Activated CD8-positive, alpha-beta memory T cell treated with anti-CD3 and anti-CD28 coated beads, Interleukin-2, amount 10 ng/mL, durations not matched to agents 7 days and 5 days (primary cell): ENCODE measurements at regions of chr2 and their contacts with region 1.

Region 1: DNA sequence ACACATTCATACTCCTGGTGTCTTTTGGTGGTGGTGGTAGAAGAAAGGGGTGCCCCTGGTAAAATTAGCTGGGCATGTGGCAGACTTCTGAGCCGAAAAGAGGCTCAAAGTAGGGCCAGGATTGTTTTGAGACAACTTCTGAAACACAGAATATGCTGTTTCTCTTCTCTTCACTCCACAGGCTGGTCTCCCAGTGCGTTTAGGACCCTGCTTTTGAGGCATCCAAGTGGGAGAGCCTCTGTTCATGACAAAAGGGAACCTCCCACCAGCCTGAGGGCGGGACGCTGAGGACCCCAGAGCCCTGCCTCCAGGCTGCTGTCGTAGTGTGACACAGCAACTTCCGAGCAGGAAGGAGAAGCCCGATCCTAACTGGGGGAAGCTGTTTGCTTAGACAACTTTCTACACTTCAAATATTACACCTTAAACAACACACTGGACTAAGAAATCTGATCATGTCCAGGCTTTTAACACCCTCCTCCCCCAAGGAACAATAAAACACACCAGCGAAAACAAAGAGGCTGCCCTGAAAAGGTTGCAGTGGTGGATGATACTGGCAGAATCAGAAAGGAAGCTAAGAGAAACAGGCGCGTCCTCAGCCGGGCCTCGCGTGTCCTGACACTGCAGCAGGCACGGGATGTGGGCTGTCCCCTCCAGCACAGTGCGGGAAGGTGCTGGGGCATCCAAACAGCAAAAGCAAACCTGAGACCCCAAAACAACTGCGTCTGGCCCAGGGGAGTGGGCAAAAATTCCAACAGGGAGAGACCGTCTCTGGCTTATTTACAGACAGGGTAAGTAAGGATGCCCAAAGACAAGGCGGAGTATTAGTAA is 9.3 kb downstream of the SERTAD2 start:
- DNase-seq: peak; percentile 83
- ATAC-seq: peak; percentile 84
- H3K4me3 Mint-ChIP-seq: peak overlapping the region; percentile 85
- H3K27ac Mint-ChIP-seq: peak overlapping the region; percentile 93
- H3K4me1 Mint-ChIP-seq: peaks cover 77% of the 10 kb centered on the region
- H3K27me3 Mint-ChIP-seq: no peaks in the 10 kb centered on the region

Region 2: GRCh38 chr2:64609227-64609941 is 35.0 kb before region 1 on chr2:
- CTCF ChIA-PET with region 1: interaction called, 54 read pairs
- DNase-seq: peak; percentile 75
- ATAC-seq: peak; percentile 75
- H3K4me3 Mint-ChIP-seq: peak overlapping the region; percentile 64
- H3K27ac Mint-ChIP-seq: no peak overlapping the region
- H3K4me1 Mint-ChIP-seq: peaks cover 26% of the 10 kb centered on the region
- H3K27me3 Mint-ChIP-seq: peaks cover 14% of the 10 kb centered on the region

Region 3: DNA sequence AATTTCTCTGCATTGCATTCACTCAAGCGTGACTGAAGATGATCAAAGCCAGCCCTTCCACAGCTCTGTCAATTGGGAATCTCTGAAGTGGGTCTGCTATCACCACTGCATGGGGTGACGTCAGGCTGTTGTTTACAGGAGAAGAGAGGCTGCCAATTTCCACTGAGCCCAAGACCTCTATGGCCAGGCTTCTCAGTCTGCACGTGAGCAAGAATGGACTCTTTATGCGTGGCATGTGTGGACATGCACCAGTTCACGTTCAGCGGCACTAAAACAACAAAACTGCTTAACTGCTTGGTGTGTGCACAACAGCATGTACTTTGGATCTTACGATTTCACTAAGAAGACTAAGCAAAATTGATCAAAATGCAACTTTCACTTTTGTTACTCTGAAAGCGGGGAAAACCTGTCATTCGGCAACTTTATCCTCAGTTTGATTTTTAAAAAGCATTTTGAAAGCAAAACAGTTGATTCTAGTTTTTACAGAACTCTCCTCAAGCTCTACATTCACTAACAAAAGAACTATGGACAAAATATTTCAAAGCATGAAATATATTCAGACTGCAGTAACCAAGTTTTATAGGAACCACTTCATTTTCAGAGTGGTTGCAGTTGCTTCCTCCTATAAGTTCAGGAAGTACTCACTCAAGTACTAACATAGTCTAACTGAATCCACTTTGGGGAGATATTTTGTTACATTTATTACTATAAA is 86.3 kb after region 1 on chr2:
- CTCF ChIA-PET with region 1: interaction called, 19 read pairs
- DNase-seq: peak; percentile 68
- ATAC-seq: peak; percentile 61
- H3K4me3 Mint-ChIP-seq: peak overlapping the region; percentile 72
- H3K27ac Mint-ChIP-seq: peak overlapping the region; percentile 90
- H3K4me1 Mint-ChIP-seq: peaks cover 67% of the 10 kb centered on the region
- H3K27me3 Mint-ChIP-seq: no peaks in the 10 kb centered on the region

Region 4: GRCh38 chr2:64831134-64831976 is 187.0 kb after region 1 on chr2:
- CTCF ChIA-PET with region 1: interaction called, 52 read pairs
- DNase-seq: peak; percentile 91
- ATAC-seq: peak; percentile 97
- H3K4me3 Mint-ChIP-seq: peak overlapping the region; percentile 52
- H3K27ac Mint-ChIP-seq: peak overlapping the region; percentile 83
- H3K4me1 Mint-ChIP-seq: peaks cover 21% of the 10 kb centered on the region
- H3K27me3 Mint-ChIP-seq: peaks cover 10% of the 10 kb centered on the region

Region 5: GRCh38 chr2:64859312-64860212 is 215.2 kb after region 1 on chr2:
- CTCF ChIA-PET with region 1: interaction called, 10 read pairs
- DNase-seq: no peak
- ATAC-seq: no peak
- H3K4me3 Mint-ChIP-seq: no peak overlapping the region
- H3K27ac Mint-ChIP-seq: no peak overlapping the region
- H3K4me1 Mint-ChIP-seq: peaks cover 6% of the 10 kb centered on the region
- H3K27me3 Mint-ChIP-seq: peaks cover 5% of the 10 kb centered on the region

Region 6: DNA sequence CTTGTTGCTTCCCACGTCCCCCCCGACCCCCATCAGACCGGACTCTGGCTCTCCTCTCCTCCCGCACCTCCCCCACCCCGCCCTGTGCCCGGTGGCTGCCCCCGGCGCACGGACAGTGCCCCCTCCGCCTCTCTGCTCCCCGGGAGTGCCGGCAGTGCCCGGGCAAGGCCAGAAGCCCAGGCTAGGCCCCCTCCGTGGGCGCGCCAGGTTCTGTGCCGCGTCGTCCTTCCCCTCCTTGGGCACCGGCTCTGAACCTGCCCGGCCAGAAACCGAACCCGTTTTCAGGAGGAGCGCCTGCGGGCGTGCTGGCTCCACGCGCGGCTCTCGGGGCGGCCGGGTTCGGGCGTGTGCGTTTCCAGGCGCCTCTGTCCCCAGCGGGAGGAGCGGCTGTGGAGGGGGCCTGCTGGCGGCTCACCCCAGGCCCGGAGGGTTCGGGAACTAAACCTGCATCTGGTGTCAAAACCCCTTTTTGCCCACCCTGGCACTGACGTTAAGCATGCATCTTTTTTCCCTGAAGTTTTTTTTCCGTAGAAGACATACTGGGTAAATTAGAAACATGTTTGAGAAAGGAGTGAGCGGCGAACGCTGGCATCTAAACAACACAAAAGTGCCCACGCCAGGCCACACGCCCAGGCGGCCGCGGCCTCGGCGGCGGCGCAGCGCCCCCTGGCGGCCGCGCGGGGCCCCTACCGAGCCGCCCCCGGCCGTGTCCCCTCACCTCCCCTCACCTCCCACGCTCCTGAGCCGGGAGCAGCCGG is 220.9 kb after region 1 on chr2:
- CTCF ChIA-PET with region 1: interaction called, 15 read pairs
- DNase-seq: peak; percentile 69
- ATAC-seq: peak; percentile 95
- H3K4me3 Mint-ChIP-seq: peak overlapping the region; percentile 66
- H3K27ac Mint-ChIP-seq: no peak overlapping the region
- H3K4me1 Mint-ChIP-seq: no peaks in the 10 kb centered on the region
- H3K27me3 Mint-ChIP-seq: peaks cover 9% of the 10 kb centered on the region